PC-9 (cell line): ENCODE measurements at regions of chr2 and their contacts with region 1.

Region 1: GRCh38 chr2:118443596-118443995 is 355.3 kb downstream of the INSIG2 start:
- DNase-seq: peak in 1 of 2 experiments; percentile 79
- H3K4me3 ChIP-seq: no peak overlapping the region
- H3K27ac ChIP-seq: peak overlapping the region; percentile 42
- H3K4me1 ChIP-seq: peaks cover 16% of the 10 kb centered on the region
- H3K27me3 ChIP-seq: no peaks in the 10 kb centered on the region
- CTCF ChIP-seq: no peak

Region 2: DNA sequence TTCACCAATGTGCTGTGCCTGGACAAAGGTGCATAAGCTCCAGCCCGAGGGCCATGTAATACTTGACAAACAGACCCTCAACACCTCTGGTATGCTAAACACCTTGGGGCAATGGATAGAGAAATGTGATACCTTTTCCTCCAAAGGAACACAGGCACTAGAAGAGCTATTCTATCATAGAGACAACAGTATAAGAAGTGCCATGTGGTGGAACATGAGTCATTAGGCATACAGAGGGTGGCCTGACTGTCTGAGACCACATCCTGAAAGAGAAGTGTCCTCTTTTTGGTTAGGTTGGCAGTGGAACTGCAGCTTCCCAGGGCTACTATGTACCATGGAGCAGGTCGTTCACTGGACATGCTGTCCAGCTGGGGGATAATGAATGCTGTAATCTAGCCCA is 201.4 kb before region 1 on chr2:
- CTCF ChIA-PET with region 1: no interaction called
- POLR2A ChIA-PET with region 1: no interaction called
- intact Hi-C with region 1: no loop called
- DNase-seq: peak; percentile 61 to 97
- H3K4me3 ChIP-seq: no peak overlapping the region
- H3K27ac ChIP-seq: peak overlapping the region; percentile 25
- H3K4me1 ChIP-seq: peaks cover 41% of the 10 kb centered on the region
- H3K27me3 ChIP-seq: no peaks in the 10 kb centered on the region
- CTCF ChIP-seq: peak; percentile 39

Region 3: DNA sequence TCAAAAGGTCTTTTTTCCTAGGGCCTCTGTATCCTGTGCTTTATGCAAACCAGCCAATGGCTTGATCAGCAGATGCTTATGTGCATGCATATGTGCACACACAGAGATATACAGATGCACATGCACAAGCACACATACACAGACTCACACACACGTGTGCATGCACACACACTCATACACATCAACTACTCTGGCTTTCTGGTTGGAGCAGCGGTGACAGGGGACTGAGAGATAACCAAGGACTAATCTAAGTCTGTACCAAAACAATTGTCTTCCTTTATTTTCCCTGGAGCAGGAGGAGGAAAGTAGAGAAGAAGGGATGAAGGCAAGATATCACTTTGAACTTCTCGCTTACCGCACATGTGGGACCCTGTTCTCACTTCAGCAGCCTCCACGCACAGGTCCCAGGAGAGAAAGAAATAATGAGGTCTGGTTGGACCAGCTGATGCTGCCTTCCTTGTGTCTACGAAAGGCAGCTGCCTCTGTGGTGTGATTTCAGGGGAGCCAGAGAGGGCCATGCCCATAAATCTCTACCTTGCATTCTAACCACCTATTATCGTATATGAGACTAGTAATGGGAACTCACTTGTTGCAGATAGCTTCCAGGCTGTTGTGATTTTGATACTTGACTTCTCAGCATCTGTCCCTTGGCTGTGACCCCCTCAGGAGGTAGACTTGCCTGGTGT is 65.9 kb after region 1 on chr2:
- CTCF ChIA-PET with region 1: no interaction called
- POLR2A ChIA-PET with region 1: interaction called, 13 read pairs
- intact Hi-C with region 1: no loop called
- DNase-seq: no peak
- H3K4me3 ChIP-seq: no peak overlapping the region
- H3K27ac ChIP-seq: no peak overlapping the region
- H3K4me1 ChIP-seq: no peaks in the 10 kb centered on the region
- H3K27me3 ChIP-seq: no peaks in the 10 kb centered on the region
- CTCF ChIP-seq: no peak